SK-N-SH (cell line): ENCODE measurements at regions of chr17 and their contacts with region 1.

Region 1: DNA sequence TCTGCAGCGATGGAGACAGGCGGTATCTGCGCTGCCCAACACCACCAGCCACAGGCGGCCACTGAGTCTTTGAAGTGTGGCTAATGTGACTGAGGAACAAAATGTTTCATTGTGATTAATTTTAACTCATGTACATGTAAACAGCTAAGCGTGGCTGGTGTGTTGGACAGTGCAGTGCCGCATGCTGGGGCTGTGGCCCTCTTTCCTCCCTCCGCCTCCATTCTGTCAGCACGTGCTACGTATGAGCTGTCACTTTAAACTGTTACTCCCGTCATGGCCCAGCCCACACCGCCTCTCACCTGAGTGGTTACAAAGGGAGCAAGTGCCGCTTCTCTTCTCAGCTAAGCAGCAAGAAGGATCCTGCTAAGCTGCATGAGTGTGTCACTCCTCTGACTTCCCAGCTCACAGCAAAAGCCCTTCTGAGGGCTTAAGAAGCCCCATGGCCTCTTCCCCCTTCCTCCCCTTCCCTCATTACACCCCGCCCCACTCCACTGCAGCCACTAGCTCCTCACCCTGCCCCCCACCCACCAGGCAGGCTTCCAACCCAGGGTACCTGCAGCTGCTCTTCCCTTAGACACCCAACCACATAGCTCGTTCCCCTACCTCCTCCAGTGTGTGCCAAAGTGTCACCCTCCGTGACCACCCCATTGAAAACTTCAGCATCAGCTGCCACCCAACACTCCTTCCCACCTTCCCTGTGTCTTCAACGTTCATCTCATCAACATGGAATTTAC is 15.0 kb downstream of the HASPIN start:
- DNase-seq: no peak
- H3K4me3 ChIP-seq: no peak overlapping the region
- H3K27ac ChIP-seq: no peak overlapping the region
- H3K4me1 ChIP-seq: peaks cover 0 to 3% of the 10 kb centered on the region in 2 experiments; a peak in 1 of 4 replicates
- H3K27me3 ChIP-seq: no peaks in the 10 kb centered on the region
- CTCF ChIP-seq: no peak
- EP300 ChIP-seq: no peak
- RAD21 ChIP-seq: no peak

Region 2: DNA sequence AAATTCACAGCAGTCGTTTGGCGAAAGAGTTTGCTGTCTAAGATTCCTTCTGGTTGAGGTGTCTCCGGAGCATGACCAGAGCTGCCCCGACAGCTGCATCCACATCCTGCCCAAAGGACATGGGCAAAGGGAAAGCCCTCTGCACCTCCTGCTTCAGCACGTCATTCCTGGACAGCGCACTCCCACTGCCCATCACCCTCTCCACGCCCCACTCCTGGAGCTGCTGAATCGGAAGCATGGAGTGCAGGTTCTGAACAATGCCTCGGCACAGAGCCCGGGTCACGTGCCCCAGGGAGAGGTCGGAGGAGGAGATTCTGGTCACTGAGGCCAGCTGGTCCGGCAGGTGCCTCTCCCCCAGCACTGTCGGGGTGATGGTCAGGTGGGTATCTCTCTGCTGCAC is 128.2 kb before region 1 on chr17:
- CTCF ChIA-PET with region 1: no interaction called
- POLR2A ChIA-PET with region 1: no interaction called
- DNase-seq: no peak
- H3K4me3 ChIP-seq: no peak overlapping the region
- H3K27ac ChIP-seq: no peak overlapping the region
- H3K4me1 ChIP-seq: no peaks in the 10 kb centered on the region
- H3K27me3 ChIP-seq: no peaks in the 10 kb centered on the region
- CTCF ChIP-seq: no peak
- EP300 ChIP-seq: no peak
- RAD21 ChIP-seq: no peak

Region 3: DNA sequence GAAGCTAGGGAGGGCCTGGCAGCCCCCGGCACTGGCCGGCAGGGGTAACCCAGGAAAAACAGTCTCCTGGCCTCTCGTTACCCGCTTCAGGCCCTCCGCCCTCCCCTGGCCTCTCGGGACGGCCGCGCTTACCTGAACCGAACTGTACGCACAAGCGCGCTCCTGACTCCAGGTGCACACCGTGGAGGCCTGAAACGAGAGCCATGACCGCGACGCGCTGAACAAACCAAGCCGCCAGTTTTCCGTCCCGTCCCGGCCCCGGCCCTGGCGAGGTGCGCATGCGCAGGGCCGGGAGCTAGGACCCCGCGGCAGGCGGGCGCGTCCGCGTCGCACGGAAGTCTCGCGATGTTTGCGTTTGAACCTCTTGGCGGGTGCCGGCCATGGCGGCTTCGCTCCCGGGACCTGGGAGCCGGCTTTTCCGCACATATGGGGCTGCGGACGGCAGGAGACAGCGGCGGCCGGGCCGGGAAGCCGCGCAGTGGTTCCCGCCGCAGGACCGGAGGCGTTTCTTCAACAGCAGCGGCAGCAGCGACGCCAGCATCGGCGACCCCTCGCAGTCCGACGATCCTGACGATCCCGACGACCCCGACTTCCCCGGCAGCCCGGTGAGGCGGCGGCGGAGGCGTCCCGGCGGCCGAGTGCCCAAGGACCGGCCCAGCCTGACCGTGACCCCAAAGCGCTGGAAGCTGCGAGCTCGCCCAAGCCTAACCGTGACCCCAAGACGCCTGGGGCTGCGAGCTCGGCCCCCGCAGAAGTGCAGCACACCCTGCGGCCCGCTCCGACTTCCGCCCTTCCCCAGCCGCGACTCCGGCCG is 15.0 kb before region 1 on chr17 and contains the start of gene HASPIN:
- CTCF ChIA-PET with region 1: interaction called, 97 read pairs
- POLR2A ChIA-PET with region 1: interaction called, 3 read pairs
- DNase-seq: peak; percentile 100
- H3K4me3 ChIP-seq: peak within 1 kb of the TSS; percentile 77 to 85
- H3K27ac ChIP-seq: peak within 1 kb of the TSS; percentile 55 to 87; a peak in 3 of 4 replicates
- H3K4me1 ChIP-seq: peaks cover 18% of the 10 kb centered on the region in 2 experiments; a peak in 3 of 4 replicates
- H3K27me3 ChIP-seq: no peaks in the 10 kb centered on the region
- CTCF ChIP-seq: peak; percentile 29; the same call in 1 of the 2 replicates
- EP300 ChIP-seq: no peak
- RAD21 ChIP-seq: no peak
- polyA plus RNA-seq, gene HASPIN: 1.2 and 1.4 TPM in 2 replicates

Region 4: DNA sequence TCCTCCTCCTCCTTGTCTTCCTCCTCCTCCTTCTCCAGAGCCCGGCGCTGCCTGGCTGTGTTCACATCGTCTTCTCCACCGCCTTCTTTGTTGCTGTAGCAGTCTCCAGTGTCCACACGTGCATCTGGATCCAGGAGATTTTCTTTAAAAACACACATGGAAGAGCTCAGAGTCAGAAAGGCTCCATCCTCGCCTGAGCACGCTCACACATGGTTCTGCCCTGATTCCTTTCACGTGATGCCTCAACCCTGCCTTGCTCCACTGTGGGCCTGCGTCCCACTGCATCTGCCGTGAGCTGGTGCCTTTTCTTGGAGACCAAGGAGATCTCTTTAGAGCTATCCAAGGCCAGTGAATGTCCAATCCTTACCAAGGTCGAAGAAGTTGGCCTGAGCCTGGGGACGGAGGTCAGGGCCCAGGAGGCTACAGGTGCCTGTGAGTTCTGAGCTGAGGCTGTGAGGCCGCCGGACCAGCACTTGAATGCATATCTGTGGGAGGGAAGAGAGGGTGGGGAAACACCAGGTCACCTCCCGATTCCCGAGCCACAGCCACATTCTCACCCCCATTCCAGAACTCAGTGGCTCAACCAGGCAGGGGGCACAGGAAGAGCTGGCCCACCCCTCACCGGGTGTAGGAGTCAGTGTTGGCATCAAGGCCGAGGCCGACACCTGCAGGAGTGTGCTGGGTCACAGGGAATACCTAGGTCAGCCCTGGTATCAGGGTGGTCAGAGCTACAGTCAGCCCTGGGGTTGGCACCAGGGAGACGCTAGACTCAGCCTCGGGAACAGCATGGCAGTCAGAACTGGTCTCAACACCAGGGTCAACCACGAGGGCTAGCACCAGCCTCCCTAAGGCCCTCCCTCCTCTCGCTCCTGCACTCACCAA is 22.5 kb after region 1 on chr17:
- CTCF ChIA-PET with region 1: interaction called, 11 read pairs
- POLR2A ChIA-PET with region 1: no interaction called
- DNase-seq: no peak
- H3K4me3 ChIP-seq: no peak overlapping the region
- H3K27ac ChIP-seq: no peak overlapping the region
- H3K4me1 ChIP-seq: no peaks in the 10 kb centered on the region
- H3K27me3 ChIP-seq: no peaks in the 10 kb centered on the region
- CTCF ChIP-seq: no peak
- EP300 ChIP-seq: no peak
- RAD21 ChIP-seq: no peak

Region 5: DNA sequence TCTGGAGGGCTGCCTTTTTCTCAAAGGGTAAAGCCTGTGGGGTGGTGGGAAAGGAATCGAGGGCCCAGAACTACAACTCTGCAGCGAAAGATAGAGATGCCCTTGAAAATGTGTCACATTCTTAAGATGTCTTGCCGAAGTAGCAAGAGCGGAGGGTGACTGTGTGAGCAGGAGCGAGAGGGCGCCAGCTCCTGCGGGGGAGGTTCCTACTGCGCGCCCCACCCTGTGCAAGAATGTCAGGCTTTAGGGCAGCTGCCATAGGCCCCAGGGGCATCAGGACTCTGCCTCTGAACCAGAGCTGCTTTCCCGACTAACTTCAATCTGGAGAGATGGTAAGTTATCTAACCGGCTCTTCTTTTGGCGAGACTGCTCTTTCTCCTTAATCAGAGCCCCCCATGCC is 74.0 kb after region 1 on chr17:
- CTCF ChIA-PET with region 1: interaction called, 17 read pairs
- POLR2A ChIA-PET with region 1: no interaction called
- DNase-seq: no peak
- H3K4me3 ChIP-seq: no peak overlapping the region
- H3K27ac ChIP-seq: no peak overlapping the region
- H3K4me1 ChIP-seq: no peaks in the 10 kb centered on the region
- H3K27me3 ChIP-seq: no peaks in the 10 kb centered on the region
- CTCF ChIP-seq: no peak
- EP300 ChIP-seq: no peak
- RAD21 ChIP-seq: no peak

Region 6: GRCh38 chr17:3838206-3838605 is 99.5 kb after region 1 on chr17:
- CTCF ChIA-PET with region 1: interaction called, 13 read pairs
- POLR2A ChIA-PET with region 1: no interaction called
- DNase-seq: no peak
- H3K4me3 ChIP-seq: no peak overlapping the region
- H3K27ac ChIP-seq: no peak overlapping the region; a peak in 1 of 4 replicates
- H3K4me1 ChIP-seq: no peaks in the 10 kb centered on the region
- H3K27me3 ChIP-seq: no peaks in the 10 kb centered on the region
- CTCF ChIP-seq: no peak
- EP300 ChIP-seq: no peak
- RAD21 ChIP-seq: no peak

Region 7: DNA sequence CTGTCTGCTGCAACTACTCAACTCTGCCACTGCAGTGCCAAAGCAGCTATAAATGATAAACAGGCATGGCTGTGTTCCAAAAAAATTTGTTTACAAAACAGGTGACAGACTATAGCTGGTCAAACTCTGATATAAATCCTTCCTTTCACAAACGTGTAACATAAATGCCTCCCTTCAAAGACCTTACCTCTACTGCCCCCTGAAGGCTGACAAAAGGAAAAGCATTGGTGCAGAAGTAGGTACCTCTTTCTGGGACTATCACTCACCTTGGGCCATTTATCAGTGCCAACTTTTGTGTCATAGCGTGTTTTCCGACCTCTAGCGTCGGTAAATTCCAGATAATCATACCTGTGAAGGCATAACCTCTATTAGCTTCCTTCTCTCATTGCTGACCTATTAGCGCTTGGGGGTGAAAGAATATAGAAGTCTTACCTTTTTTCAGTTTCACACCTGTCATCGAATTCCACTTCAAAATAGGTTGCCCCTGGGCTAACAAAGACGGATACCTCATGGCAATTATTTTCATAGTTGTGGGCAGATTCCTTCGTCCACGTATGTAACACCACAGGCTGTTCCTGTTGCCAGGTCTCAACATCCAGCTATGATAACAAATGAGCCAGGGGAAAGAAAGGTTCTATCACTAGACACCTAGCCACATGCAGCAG is 336.2 kb after region 1 on chr17:
- CTCF ChIA-PET with region 1: interaction called, 12 read pairs
- POLR2A ChIA-PET with region 1: no interaction called
- DNase-seq: peak; percentile 61
- H3K4me3 ChIP-seq: no peak overlapping the region; a peak in 1 of 4 replicates
- H3K27ac ChIP-seq: no peak overlapping the region
- H3K4me1 ChIP-seq: no peaks in the 10 kb centered on the region
- H3K27me3 ChIP-seq: no peaks in the 10 kb centered on the region
- CTCF ChIP-seq: peak; percentile 81
- EP300 ChIP-seq: no peak
- RAD21 ChIP-seq: peak; percentile 79